Thyroid gland (tissue), 4 donors: ENCODE measurements at regions of chr6 and their contacts with region 1.

Region 1: DNA sequence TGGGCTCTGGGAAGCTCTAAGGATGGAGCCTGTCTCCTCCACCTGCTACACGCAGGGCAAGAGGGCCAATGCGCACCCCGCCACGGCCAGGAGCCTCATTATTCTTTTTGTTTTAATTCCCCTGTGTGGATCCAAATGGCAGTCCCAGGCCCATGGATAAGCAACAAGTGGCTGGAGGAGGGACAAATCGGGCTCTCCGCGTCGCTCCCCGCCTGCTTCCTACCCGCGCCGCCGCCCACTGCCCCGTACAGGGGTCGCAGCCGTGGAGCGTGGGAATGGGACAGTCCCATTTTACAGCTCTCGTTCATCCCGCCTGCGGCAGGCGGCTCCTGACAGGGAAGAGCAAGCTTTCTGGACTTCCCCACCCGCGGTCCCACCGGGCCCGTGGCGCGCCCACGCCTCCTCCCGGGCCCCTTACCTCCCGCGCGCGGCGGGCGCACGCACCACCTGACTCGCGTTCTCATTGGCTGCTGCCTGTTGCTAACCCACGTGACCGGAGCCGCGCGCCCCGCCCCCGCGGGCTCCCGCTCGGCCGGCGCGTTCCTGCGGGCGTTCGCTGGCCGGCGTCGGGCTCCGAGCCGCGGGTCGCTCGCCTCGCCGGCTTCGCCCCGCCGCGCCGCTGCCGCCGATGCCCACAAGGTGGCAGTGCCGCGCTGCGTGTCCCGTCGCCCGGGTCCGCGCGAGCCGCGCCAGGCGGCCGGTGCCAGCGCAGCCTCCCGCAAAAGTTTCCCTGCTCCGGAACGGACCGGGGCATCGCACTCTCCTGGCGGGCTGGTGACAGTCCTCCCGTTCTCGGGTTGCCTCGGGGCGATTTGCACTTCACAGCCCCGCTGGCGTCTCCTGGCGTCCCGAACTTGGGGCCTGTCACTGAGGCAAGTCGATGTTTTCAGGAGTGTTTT is 93.3 kb downstream of the CD83 start:
- DNase-seq: peak; percentile 95 to 96
- H3K4me3 ChIP-seq: peak overlapping the region; percentile 29 to 82 (median 62)
- H3K27ac ChIP-seq: peak overlapping the region; percentile 43 to 91 (median 82)
- H3K4me1 ChIP-seq: peaks cover 0 to 13% of the 10 kb centered on the region in 2 donors
- H3K27me3 ChIP-seq: no peaks in the 10 kb centered on the region
- CTCF ChIP-seq: peak; percentile 15 to 99 (median 74)
- POLR2A ChIP-seq: peak; percentile 5 to 81

Region 2: DNA sequence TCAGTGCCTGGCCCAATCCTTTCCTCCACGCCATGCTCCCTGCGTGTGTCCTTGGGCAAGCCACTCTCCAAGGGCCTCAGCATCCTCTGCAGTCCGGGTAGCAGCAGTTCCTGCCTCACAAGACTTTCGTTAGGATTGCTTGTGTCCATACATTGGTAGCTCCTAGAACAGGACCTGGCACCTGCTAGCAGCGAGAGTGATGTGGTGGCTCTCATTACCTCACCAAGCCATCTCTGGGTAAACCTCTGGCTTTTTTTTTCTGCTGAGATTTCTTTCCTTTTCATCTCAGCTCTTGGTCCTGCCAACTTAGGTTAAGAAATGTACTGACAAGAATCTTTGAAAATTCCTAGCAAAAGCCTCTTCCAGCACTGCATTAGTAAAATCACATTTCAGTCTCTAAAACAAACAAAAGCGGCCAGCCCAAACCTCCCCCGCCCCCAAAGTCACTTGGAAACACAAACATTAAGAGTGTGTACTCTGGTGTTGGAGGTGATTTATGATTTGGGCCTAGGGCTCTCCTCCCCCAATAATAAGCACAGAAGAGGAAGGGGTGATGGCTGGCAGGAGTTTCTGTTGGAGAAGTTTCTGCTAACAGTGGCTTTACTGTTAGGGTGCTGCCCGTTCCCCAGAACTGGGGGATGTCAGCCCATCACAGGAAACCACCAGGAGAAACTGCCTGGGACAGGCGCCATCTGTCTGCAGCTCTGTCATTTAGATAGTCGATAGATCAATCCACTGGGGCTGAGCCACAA is 105.9 kb after region 1 on chr6:
- intact Hi-C with region 1: loop called (anchors 10 kb)
- DNase-seq: peak; percentile 74 to 78
- H3K4me3 ChIP-seq: no peak overlapping the region
- H3K27ac ChIP-seq: peak overlapping the region; percentile 46 to 70 (median 61)
- H3K4me1 ChIP-seq: peaks cover 23 to 25% of the 10 kb centered on the region in 2 donors
- H3K27me3 ChIP-seq: no peaks in the 10 kb centered on the region
- CTCF ChIP-seq: peak in 2 of 6 experiments; percentile 7 to 15
- POLR2A ChIP-seq: no peak